ENCODE measurements at regions of chr17 and their contacts with region 1.

Region 1: GRCh38 chr17:28335201-28335955 is at the starts of genes IFT20 and TNFAIP1:
- DNase-seq: peak; percentile 99
- ATAC-seq: peak; percentile 92
- H3K4me3 ChIP-seq: peak within 1 kb of the TSS; percentile 97 to 99
- H3K27ac ChIP-seq: peak within 1 kb of the TSS; percentile 81
- H3K4me1 ChIP-seq: peaks cover 16 to 38% of the 10 kb centered on the region in 2 experiments
- H3K27me3 ChIP-seq: no peaks in the 10 kb centered on the region
- CTCF ChIP-seq: no peak
- POLR2A ChIP-seq: peak; percentile 69
- RAD21 ChIP-seq: no peak
- total RNA-seq, gene IFT20: 21.7 TPM
- total RNA-seq, gene TNFAIP1: 33.4 TPM

Region 2: GRCh38 chr17:28112220-28113005 is 223.0 kb before region 1 on chr17:
- CTCF ChIA-PET with region 1: no interaction called
- POLR2A ChIA-PET with region 1: no interaction called
- RAD21 ChIA-PET with region 1: no interaction called
- intact Hi-C with region 1: no loop called
- DNase-seq: no peak
- ATAC-seq: no peak
- H3K4me3 ChIP-seq: no peak overlapping the region
- H3K27ac ChIP-seq: no peak overlapping the region
- H3K4me1 ChIP-seq: no peaks in the 10 kb centered on the region
- H3K27me3 ChIP-seq: no peaks in the 10 kb centered on the region
- CTCF ChIP-seq: no peak
- POLR2A ChIP-seq: no peak
- RAD21 ChIP-seq: no peak

Region 3: DNA sequence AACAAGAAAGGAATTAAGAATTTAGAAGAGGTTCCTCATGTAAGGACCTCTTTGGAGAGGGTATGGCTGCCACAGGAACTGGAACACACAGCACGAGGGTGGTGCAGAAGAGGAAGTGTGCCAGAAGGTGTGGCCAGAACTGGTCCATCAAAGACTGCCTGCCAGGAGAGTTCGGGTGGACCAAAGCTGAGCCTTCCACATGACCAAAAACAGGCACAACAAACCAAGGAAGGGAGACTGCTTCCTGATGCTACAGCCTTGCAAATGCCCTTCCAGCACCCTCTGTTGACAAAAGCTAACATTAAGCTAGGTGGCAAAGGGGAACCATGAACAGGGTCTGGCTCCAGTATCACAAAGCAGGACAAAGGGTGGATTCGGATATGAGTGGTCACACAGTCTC is 142.1 kb before region 1 on chr17:
- CTCF ChIA-PET with region 1: no interaction called
- POLR2A ChIA-PET with region 1: no interaction called
- RAD21 ChIA-PET with region 1: no interaction called
- intact Hi-C with region 1: no loop called
- DNase-seq: no peak
- ATAC-seq: no peak
- H3K4me3 ChIP-seq: no peak overlapping the region
- H3K27ac ChIP-seq: no peak overlapping the region
- H3K4me1 ChIP-seq: no peaks in the 10 kb centered on the region
- H3K27me3 ChIP-seq: no peaks in the 10 kb centered on the region
- CTCF ChIP-seq: no peak
- POLR2A ChIP-seq: no peak
- RAD21 ChIP-seq: no peak

Region 4: DNA sequence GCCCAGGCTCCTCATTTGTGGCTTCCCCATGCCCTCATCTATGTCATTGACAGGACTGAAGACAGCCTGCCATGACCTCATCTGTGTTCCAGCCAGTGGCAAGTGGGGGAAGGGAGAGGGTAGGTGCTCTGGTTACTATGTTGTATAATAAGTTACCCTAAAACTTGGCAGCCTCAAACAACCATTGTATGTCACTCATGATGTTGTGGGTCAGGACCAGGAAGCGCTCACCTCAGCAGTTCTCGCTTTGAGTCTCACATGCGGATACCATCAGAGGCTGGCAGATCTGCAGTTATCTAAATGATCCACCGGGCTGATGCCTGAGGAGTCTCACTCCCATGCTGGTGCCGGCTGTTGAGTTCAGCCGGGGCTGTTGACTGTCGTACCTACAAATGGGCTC is 105.4 kb before region 1 on chr17:
- CTCF ChIA-PET with region 1: no interaction called
- POLR2A ChIA-PET with region 1: no interaction called
- RAD21 ChIA-PET with region 1: no interaction called
- intact Hi-C with region 1: loop called (anchors 5 kb)
- DNase-seq: no peak
- ATAC-seq: no peak
- H3K4me3 ChIP-seq: no peak overlapping the region
- H3K27ac ChIP-seq: no peak overlapping the region
- H3K4me1 ChIP-seq: peaks cover 13 to 38% of the 10 kb centered on the region in 2 experiments
- H3K27me3 ChIP-seq: no peaks in the 10 kb centered on the region
- CTCF ChIP-seq: no peak
- POLR2A ChIP-seq: no peak
- RAD21 ChIP-seq: no peak

Region 5: DNA sequence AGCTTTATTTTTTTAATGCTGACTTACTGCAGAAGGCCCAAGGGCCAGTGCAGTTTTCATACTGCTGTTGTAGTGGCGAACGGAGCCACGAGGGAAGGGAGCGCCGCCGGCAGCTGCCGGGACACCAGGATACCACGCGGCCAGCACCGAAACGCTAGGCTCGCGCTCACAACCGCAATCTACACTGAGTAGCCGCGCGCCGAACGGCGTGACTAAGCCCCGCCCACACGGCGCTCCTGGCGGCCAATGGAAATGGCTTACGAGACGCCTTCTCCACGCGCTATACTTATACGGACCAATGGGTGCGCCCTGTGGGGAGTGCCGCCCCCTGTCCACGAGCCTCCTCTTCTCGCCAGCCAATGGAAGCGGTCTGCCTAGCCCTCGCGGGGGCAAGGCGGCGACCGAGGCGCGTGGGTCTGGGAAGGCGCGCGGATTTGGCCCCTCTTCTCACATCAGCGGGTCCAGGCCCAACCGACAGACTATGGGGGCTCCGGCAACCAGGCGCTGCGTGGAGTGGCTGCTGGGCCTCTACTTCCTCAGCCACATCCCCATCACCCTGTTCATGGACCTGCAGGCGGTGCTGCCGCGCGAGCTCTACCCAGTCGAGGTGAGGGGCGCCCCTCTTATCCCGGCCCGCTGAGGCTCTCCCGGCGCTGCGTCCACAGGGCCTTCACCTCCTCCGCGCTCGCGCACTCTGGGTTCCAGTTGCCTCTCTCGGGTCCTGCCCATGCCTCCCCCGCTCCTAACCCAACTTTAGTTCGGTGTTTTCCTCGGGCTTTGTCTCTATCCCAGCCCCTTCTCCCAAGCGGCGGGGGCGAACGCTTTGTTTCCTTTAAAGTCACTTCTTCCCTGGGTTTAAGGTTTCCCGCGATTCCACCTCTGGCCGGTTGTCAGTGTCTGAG is 16.4 kb before region 1 on chr17 and contains the start of gene TMEM97:
- CTCF ChIA-PET with region 1: interaction called, 4 read pairs
- POLR2A ChIA-PET with region 1: interaction called, 8 read pairs
- RAD21 ChIA-PET with region 1: no interaction called
- intact Hi-C with region 1: loop called (anchors 1 kb)
- DNase-seq: peak; percentile 90
- ATAC-seq: peak; percentile 97
- H3K4me3 ChIP-seq: peak within 1 kb of the TSS; percentile 86 to 95
- H3K27ac ChIP-seq: peak within 1 kb of the TSS; percentile 71
- H3K4me1 ChIP-seq: peaks cover 12 to 26% of the 10 kb centered on the region in 2 experiments; a peak in 3 of 4 replicates
- H3K27me3 ChIP-seq: no peaks in the 10 kb centered on the region
- CTCF ChIP-seq: 0 out of 6 replicates have a peak, but pooled peaks of 1 of the 3 experiments have one; percentile 2
- POLR2A ChIP-seq: peak; percentile 29
- RAD21 ChIP-seq: no peak
- total RNA-seq, gene TMEM97: 55.6 TPM

Region 6: GRCh38 chr17:28357061-28357900 is 21.9 kb after region 1 on chr17 and contains the start of gene POLDIP2:
- CTCF ChIA-PET with region 1: interaction called, 6 read pairs
- POLR2A ChIA-PET with region 1: interaction called, 26 read pairs
- RAD21 ChIA-PET with region 1: interaction called, 3 to 9 read pairs
- intact Hi-C with region 1: no loop called
- DNase-seq: peak; percentile 79
- ATAC-seq: peak; percentile 98
- H3K4me3 ChIP-seq: peak within 1 kb of the TSS; percentile 72 to 93
- H3K27ac ChIP-seq: peak within 1 kb of the TSS; percentile 83
- H3K4me1 ChIP-seq: peaks cover 16 to 18% of the 10 kb centered on the region in 2 experiments; a peak in 3 of 4 replicates
- H3K27me3 ChIP-seq: no peaks in the 10 kb centered on the region
- CTCF ChIP-seq: no peak
- POLR2A ChIP-seq: peak; percentile 79
- RAD21 ChIP-seq: no peak
- total RNA-seq, gene POLDIP2: 78.0 TPM

Measured in HCT116 (cell line).